Activated CD8-positive, alpha-beta T cell treated with anti-CD3 and anti-CD28 coated beads, Interleukin-2, amount 10 ng/mL, durations not matched to agents 7 days and 5 days (primary cell): ENCODE measurements at regions of chr5 and their contacts with region 1.

Region 1: DNA sequence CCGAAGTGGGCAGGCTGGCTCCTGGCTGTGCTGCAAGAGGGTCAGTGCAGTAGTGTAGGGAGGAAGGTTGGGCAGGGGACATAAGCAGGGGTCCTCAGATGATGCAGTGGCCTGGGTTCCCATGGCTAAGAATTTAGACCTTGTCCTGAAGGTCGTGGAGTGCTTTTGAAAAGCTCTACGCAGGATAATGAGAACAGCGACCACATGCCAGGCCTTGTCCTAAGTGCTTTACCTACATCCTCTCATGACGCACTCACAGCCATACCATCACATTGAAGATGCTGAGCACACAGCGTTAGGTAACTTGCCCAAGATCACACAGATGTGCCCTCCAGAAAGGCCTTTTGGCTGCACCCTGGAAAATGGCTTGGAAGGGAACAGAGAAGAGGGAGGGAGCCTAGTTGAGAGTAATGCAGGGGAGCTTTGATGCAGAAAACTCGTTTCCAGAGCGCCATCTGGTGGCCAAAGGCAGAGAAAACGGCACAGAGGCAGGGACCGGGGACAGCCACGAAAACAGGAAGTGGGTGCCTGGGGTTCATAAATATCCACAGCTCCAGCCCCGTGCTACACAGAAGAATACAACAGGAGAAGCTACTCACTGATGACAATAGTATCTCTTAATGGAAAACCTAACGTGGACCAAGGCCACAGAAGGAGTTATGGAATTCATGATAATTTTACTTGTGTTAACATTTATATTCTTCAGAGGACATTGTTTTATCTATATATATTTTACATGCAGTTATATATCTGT is 2.6 kb upstream of the PCDH12 start:
- DNase-seq: peak; percentile 96
- ATAC-seq: peak; percentile 92
- H3K4me3 Mint-ChIP-seq: peak overlapping the region; percentile 40
- H3K27ac Mint-ChIP-seq: peak overlapping the region; percentile 86
- H3K4me1 Mint-ChIP-seq: peaks cover 58% of the 10 kb centered on the region
- H3K27me3 Mint-ChIP-seq: no peaks in the 10 kb centered on the region

Region 2: GRCh38 chr5:141681695-141682641 is 278.7 kb before region 1 on chr5 and contains the start of gene ARAP3:
- CTCF ChIA-PET with region 1: interaction called, 24 read pairs
- POLR2A ChIA-PET with region 1: interaction called, 4 read pairs
- DNase-seq: peak; percentile 54
- ATAC-seq: peak; percentile 86
- H3K4me3 Mint-ChIP-seq: peak within 1 kb of the TSS; percentile 79
- H3K27ac Mint-ChIP-seq: peak within 1 kb of the TSS; percentile 82
- H3K4me1 Mint-ChIP-seq: peaks cover 38% of the 10 kb centered on the region
- H3K27me3 Mint-ChIP-seq: peaks cover 3% of the 10 kb centered on the region
- total RNA-seq, gene ARAP3: 8.5 to 8.8 TPM

Region 3: DNA sequence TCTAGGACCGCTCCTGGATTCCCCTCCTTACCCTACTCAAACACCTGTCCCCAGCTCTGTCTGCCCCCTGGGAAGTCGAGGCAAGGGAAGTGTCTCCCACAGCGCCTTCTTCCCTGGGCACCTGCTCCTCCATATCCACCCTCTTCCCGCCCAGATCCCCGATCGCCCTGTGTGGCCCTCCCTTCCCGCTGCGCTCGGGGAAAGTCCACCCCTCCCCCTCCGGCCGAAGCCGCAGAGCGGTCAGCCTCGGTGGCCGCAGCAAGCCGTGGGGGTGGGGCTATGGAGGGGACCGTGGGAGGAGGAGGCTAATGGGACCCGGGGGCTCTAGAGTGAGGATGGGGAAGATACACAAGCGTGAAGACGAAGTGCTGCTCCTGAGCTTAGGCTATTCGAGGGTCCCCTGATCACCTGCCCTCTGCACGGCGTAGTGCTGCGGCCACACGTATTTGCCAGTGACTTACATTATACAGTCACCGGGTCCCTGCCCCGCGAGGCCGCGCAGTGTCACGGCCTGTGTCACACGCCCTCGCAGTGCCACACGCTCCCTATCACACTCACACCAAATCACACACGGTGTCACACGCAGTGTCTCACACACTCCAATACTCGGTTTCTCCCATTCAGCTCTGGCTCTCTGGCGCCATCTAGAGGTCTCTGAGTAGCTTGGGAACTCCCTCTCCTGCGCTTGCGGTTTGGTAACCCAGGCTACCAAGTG is 81.8 kb before region 1 on chr5:
- CTCF ChIA-PET with region 1: interaction called, 145 read pairs
- POLR2A ChIA-PET with region 1: interaction called, 4 read pairs
- DNase-seq: peak; percentile 92
- ATAC-seq: peak; percentile 88
- H3K4me3 Mint-ChIP-seq: peak overlapping the region; percentile 30
- H3K27ac Mint-ChIP-seq: no peak overlapping the region
- H3K4me1 Mint-ChIP-seq: peaks cover 24% of the 10 kb centered on the region
- H3K27me3 Mint-ChIP-seq: peaks cover 79% of the 10 kb centered on the region

Region 4: GRCh38 chr5:141923448-141924352 is 36.9 kb before region 1 on chr5 and contains the start of gene DELE1:
- CTCF ChIA-PET with region 1: interaction called, 59 read pairs
- POLR2A ChIA-PET with region 1: interaction called, 27 read pairs
- DNase-seq: peak; percentile 94
- ATAC-seq: peak; percentile 98
- H3K4me3 Mint-ChIP-seq: peak within 1 kb of the TSS; percentile 91
- H3K27ac Mint-ChIP-seq: peak within 1 kb of the TSS; percentile 93
- H3K4me1 Mint-ChIP-seq: peaks cover 38% of the 10 kb centered on the region
- H3K27me3 Mint-ChIP-seq: no peaks in the 10 kb centered on the region
- total RNA-seq, gene DELE1: 65.7 to 65.8 TPM

Region 5: GRCh38 chr5:141976176-141976575 is 15.6 kb after region 1 on chr5:
- CTCF ChIA-PET with region 1: interaction called, 186 read pairs
- POLR2A ChIA-PET with region 1: interaction called, 33 read pairs
- DNase-seq: no peak
- ATAC-seq: no peak
- H3K4me3 Mint-ChIP-seq: no peak overlapping the region
- H3K27ac Mint-ChIP-seq: no peak overlapping the region
- H3K4me1 Mint-ChIP-seq: peaks cover 18% of the 10 kb centered on the region
- H3K27me3 Mint-ChIP-seq: no peaks in the 10 kb centered on the region

Region 6: DNA sequence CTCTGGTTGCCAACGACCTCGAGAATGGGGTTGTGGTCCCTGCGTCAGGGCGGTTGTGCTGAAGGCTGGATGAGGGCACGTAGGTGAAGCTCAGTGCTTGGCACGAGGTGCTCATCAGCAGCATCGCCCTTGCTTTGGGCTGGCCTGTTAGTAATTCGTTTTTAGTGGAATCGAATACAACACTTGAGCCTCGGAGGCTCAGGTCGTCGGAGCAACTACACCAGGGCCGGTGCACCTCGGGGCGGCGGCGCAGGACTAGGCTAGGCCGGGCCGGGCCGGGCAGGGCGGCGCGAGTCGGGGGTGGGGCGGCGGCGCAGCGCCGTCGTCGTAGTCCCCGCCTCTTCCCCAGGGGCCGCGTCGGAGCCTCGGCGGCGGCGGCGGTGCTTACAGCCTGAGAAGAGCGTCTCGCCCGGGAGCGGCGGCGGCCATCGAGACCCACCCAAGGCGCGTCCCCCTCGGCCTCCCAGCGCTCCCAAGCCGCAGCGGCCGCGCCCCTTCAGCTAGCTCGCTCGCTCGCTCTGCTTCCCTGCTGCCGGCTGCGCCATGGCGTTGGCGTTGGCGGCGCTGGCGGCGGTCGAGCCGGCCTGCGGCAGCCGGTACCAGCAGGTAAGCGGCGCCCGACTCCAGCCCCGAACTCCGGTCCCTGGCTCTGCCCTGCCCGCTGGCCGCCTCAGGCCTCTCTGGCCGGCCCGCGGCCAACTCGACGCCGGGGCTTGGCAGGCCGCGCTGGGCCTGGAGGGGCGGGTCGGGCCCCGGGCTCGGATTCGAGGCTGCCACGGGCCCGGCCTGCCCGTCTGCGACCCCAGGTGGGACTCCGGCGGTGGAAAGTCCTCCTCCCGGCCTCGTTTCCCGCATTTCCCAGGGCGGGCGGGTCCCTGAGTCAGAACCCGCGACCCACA is 148.1 kb after region 1 on chr5 and contains the start of gene NDFIP1:
- CTCF ChIA-PET with region 1: interaction called, 10 read pairs
- POLR2A ChIA-PET with region 1: no interaction called
- DNase-seq: peak; percentile 87
- ATAC-seq: peak; percentile 90
- H3K4me3 Mint-ChIP-seq: peak within 1 kb of the TSS; percentile 93
- H3K27ac Mint-ChIP-seq: peak within 1 kb of the TSS; percentile 93
- H3K4me1 Mint-ChIP-seq: peaks cover 68% of the 10 kb centered on the region
- H3K27me3 Mint-ChIP-seq: no peaks in the 10 kb centered on the region
- total RNA-seq, gene NDFIP1: 47.2 TPM